ENCODE measurements at regions of chr7 and their contacts with region 1.

Region 1: DNA sequence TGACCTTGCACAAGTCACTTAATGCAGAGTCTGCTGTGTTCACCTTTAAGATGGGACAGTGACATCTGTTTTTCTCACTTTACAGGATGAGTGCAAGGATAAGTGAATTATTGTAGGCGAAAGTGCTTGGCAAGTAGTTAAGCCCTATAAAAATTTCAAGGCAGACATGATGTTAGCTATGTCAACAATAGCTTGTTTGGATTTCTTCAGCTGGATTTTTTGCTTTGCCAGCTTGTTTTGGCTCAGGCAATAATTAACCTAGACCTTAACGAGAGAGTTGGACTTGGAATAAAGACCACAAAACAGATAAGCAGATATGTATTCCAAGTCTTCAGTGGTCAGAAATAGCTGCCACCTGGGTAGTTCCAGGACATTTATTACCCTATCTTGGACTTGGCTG is 255.2 kb downstream of the ARL4A start:
- DNase-seq: peak; percentile 92
- ATAC-seq: peak; percentile 97
- H3K4me3 ChIP-seq: peak overlapping the region; percentile 1 to 40 (median 19); a peak in 2 of 6 replicates
- H3K27ac ChIP-seq: peak overlapping the region; percentile 71
- H3K4me1 ChIP-seq: peaks cover 52% of the 10 kb centered on the region
- H3K27me3 ChIP-seq: no peaks in the 10 kb centered on the region
- CTCF ChIP-seq: no peak
- EP300 ChIP-seq: peak in 1 of 2 experiments; percentile 92; a peak in 2 of 4 replicates
- POLR2A ChIP-seq: no peak
- RAD21 ChIP-seq: no peak

Region 2: GRCh38 chr7:12152196-12152918 is 790.3 kb before region 1 on chr7:
- CTCF ChIA-PET with region 1: no interaction called
- POLR2A ChIA-PET with region 1: no interaction called
- in situ Hi-C with region 1: no loop called
- intact Hi-C with region 1: loop called (anchors 5 kb)
- DNase-seq: no peak
- ATAC-seq: no peak; the same call in 2 of the 3 replicates
- H3K4me3 ChIP-seq: no peak overlapping the region
- H3K27ac ChIP-seq: no peak overlapping the region
- H3K4me1 ChIP-seq: no peaks in the 10 kb centered on the region
- H3K27me3 ChIP-seq: no peaks in the 10 kb centered on the region
- CTCF ChIP-seq: no peak
- EP300 ChIP-seq: no peak
- POLR2A ChIP-seq: no peak
- RAD21 ChIP-seq: no peak

Region 3: GRCh38 chr7:12647364-12648219 is 295.0 kb before region 1 on chr7:
- CTCF ChIA-PET with region 1: no interaction called
- POLR2A ChIA-PET with region 1: no interaction called
- in situ Hi-C with region 1: loop called (anchors 10 kb)
- intact Hi-C with region 1: loop called (anchors 10 kb)
- DNase-seq: peak; percentile 92
- ATAC-seq: peak; percentile 87
- H3K4me3 ChIP-seq: no peak overlapping the region
- H3K27ac ChIP-seq: peak overlapping the region; percentile 59
- H3K4me1 ChIP-seq: peaks cover 49% of the 10 kb centered on the region
- H3K27me3 ChIP-seq: no peaks in the 10 kb centered on the region
- CTCF ChIP-seq: no peak
- EP300 ChIP-seq: peak in 1 of 2 experiments; percentile 84; a peak in 1 of 4 replicates
- POLR2A ChIP-seq: no peak
- RAD21 ChIP-seq: no peak

Region 4: GRCh38 chr7:12884856-12885440 is 57.7 kb before region 1 on chr7:
- CTCF ChIA-PET with region 1: no interaction called
- POLR2A ChIA-PET with region 1: no interaction called
- in situ Hi-C with region 1: no loop called
- intact Hi-C with region 1: no loop called
- DNase-seq: no peak
- ATAC-seq: no peak
- H3K4me3 ChIP-seq: no peak overlapping the region
- H3K27ac ChIP-seq: no peak overlapping the region
- H3K4me1 ChIP-seq: no peaks in the 10 kb centered on the region
- H3K27me3 ChIP-seq: no peaks in the 10 kb centered on the region
- CTCF ChIP-seq: no peak
- EP300 ChIP-seq: no peak
- POLR2A ChIP-seq: no peak
- RAD21 ChIP-seq: no peak

Region 5: DNA sequence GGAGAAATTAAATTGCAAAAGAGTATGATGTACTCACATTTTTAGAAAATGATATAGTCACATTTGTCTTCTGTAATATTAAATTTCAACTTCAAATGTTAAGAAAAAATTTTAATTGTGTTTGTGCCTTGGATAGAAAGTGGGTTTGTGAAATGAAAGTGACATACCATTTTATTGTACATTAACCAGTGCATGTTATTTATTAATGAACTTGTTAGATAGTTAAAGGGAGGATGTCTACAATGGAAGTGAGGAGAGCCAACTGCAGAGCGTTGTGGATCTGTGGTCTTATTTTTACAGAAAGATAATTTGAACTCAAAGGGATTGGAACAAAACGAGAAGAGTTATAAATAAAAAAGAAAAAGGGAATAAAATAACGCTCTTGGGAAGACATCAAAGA is 36.6 kb after region 1 on chr7:
- CTCF ChIA-PET with region 1: no interaction called
- POLR2A ChIA-PET with region 1: no interaction called
- in situ Hi-C with region 1: no loop called
- intact Hi-C with region 1: loop called (anchors 5 kb)
- DNase-seq: no peak
- ATAC-seq: no peak
- H3K4me3 ChIP-seq: no peak overlapping the region
- H3K27ac ChIP-seq: no peak overlapping the region
- H3K4me1 ChIP-seq: peaks cover 5% of the 10 kb centered on the region; the same call in 1 of the 2 replicates
- H3K27me3 ChIP-seq: no peaks in the 10 kb centered on the region
- CTCF ChIP-seq: no peak
- EP300 ChIP-seq: no peak
- POLR2A ChIP-seq: no peak
- RAD21 ChIP-seq: no peak

Region 6: DNA sequence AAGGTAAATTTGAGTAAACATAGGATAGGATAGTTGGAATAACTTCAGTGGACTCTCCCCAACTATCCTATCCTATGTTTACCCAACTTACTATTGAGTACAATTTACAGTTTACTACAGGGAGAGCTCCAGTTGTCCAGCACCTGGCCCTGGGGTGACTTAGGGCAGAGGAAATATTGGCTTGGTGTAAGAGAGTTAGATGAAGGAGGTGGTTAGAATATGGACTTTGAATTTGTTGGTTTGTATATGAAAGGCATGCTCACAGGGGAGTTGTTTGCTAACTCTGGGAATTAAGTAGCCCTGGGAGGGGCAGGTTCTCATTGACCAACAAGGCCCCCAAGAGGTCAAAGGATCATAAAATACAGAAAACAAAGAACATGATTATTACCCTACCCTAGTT is 242.5 kb after region 1 on chr7:
- CTCF ChIA-PET with region 1: no interaction called
- POLR2A ChIA-PET with region 1: no interaction called
- in situ Hi-C with region 1: no loop called
- intact Hi-C with region 1: loop called (anchors 2 kb)
- DNase-seq: peak; percentile 95
- ATAC-seq: peak; percentile 99
- H3K4me3 ChIP-seq: no peak overlapping the region; a peak in 1 of 6 replicates
- H3K27ac ChIP-seq: peak overlapping the region; percentile 62
- H3K4me1 ChIP-seq: peaks cover 32% of the 10 kb centered on the region
- H3K27me3 ChIP-seq: no peaks in the 10 kb centered on the region
- CTCF ChIP-seq: peak; percentile 20; the same call in 1 of the 2 replicates
- EP300 ChIP-seq: peak in 1 of 2 experiments; percentile 97; a peak in 2 of 4 replicates
- POLR2A ChIP-seq: no peak
- RAD21 ChIP-seq: no peak